Naive thymus-derived CD4-positive, alpha-beta T cell (primary cell): ENCODE measurements at regions of chr12 and their contacts with region 1.

Region 1: DNA sequence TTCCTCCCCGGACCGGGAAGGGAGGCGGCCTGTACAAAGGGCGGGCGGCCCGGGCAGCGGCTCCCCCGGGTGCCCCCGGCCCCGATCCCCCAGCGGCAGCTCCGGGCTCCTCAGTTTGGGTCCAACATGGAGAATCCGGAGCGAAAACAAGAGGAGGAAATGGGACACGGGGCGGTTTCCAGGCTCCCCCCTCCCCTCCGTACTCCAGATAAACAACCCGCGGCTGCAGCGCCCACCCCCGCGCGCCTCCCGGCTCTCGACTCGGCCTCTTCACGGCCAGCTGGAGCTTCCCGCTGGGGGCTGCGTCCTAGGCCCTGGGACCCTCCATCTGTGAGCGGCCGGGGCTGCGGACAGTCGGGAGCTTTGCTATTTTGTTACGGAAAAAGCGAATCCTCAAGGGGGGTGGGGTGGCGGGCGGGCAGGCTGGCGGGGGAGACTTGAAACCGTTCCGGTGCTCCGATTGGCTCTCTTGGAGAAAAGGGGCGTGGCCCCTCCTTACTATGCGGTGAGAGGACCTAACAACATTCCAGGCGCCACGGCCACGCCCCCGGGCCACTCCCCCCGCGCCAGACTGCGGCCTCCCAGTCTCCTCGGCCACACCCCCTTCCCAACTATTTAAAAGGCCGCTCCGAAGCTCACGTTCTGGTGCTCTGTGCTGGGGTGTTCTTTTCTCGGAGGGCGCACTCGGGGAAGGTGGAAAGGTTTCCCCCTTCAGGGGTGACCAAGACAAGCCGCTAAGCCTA is at the start of gene CTDSP2:
- DNase-seq: peak; percentile 59 to 92 (median 82)
- ATAC-seq: peak; percentile 85
- H3K4me3 ChIP-seq: peak within 1 kb of the TSS; percentile 79
- H3K4me3 Mint-ChIP-seq: peak within 1 kb of the TSS; percentile 87 to 97 (median 92)
- H3K27ac ChIP-seq: peak within 1 kb of the TSS; percentile 89
- H3K27ac Mint-ChIP-seq: peak within 1 kb of the TSS; percentile 75 to 94 (median 89)
- H3K4me1 ChIP-seq: peaks cover 15 to 30% of the 10 kb centered on the region in 2 donors
- H3K4me1 Mint-ChIP-seq: peaks cover 48 to 57% (median 50%) of the 10 kb centered on the region in 7 donors
- H3K27me3 ChIP-seq: no peaks in the 10 kb centered on the region
- H3K27me3 Mint-ChIP-seq: peaks cover 0 to 39% (median 9%) of the 10 kb centered on the region in 5 donors
- total RNA-seq, gene CTDSP2: 124 to 295 (median 145) TPM

Region 2: DNA sequence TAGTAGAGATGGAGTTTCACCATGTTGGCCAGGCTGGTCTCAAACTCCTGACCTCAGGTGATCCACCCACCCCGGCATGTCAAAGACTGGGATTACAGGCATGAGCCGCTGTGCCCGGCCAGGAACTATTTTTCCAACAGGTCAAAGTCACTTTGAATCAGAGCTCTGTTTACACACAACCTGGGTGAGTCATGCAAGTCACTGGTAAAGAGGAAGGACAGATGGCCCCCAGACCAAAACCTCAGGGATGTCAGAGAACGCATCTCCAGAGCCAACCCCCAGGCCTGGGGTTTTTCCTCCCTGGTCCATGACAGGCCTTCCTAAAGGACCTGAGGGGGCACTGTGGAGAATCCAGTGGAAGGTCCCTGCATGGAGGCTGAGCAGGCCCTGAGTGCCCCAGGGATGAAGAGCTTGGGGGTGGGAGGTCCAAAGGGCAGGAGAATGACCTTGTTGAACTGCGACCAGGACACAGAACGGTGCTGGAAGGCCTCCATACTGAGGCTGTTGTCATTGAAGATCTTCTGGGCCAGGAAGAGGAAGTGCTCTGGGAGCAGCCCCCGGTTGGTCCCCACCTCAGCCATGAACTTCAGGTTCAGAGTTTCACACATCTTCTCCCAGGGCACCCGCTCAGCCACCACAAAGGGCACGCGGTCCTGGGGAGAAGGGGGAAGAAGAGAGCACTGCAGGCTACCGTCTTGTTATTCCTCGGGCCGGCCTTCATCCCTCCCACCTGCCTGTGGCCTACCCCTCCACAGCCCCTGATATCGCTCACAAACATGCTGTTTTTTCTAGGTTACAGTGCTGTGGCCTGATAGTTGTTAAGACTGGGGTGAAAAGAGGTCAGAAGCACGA is 744.7 kb before region 1 on chr12:
- CTCF ChIA-PET with region 1: no interaction called
- POLR2A ChIA-PET with region 1: no interaction called
- intact Hi-C with region 1: no loop called
- DNase-seq: no peak
- ATAC-seq: peak; percentile 31
- H3K4me3 ChIP-seq: no peak overlapping the region
- H3K4me3 Mint-ChIP-seq: peak overlapping the region in 1 of 10 donors; percentile 52
- H3K27ac ChIP-seq: peak overlapping the region; percentile 43
- H3K27ac Mint-ChIP-seq: peak overlapping the region in 8 of 9 donors; percentile 13 to 84 (median 72)
- H3K4me1 ChIP-seq: no peaks in the 10 kb centered on the region
- H3K4me1 Mint-ChIP-seq: peaks cover 28 to 67% (median 40%) of the 10 kb centered on the region in 7 donors
- H3K27me3 ChIP-seq: no peaks in the 10 kb centered on the region
- H3K27me3 Mint-ChIP-seq: no peaks in the 10 kb centered on the region

Region 3: GRCh38 chr12:57693659-57694458 is 152.9 kb before region 1 on chr12 and contains the start of gene OS9:
- CTCF ChIA-PET with region 1: no interaction called
- POLR2A ChIA-PET with region 1: no interaction called
- intact Hi-C with region 1: loop called in 1 of 2 experiments (anchors 1 kb)
- DNase-seq: peak; percentile 76 to 99 (median 98)
- ATAC-seq: peak; percentile 96
- H3K4me3 ChIP-seq: peak within 1 kb of the TSS; percentile 92
- H3K4me3 Mint-ChIP-seq: no peak within 1 kb of the TSS
- H3K27ac ChIP-seq: peak within 1 kb of the TSS; percentile 83
- H3K27ac Mint-ChIP-seq: no peak within 1 kb of the TSS
- H3K4me1 ChIP-seq: peaks cover 10 to 23% of the 10 kb centered on the region in 2 donors
- H3K4me1 Mint-ChIP-seq: peaks cover 2 to 14% (median 7%) of the 10 kb centered on the region in 7 donors
- H3K27me3 ChIP-seq: no peaks in the 10 kb centered on the region
- H3K27me3 Mint-ChIP-seq: peaks cover 0 to 18% (median 7%) of the 10 kb centered on the region in 5 donors
- total RNA-seq, gene OS9: 139 to 175 (median 171) TPM

Region 4: GRCh38 chr12:57803319-57803893 is 43.3 kb before region 1 on chr12:
- CTCF ChIA-PET with region 1: interaction called, 6 read pairs
- POLR2A ChIA-PET with region 1: interaction called, 4 read pairs
- intact Hi-C with region 1: loop called in 1 of 2 experiments (anchors 1 kb)
- DNase-seq: peak in 6 of 9 donors; percentile 23 to 46 (median 35)
- ATAC-seq: peak; percentile 60
- H3K4me3 ChIP-seq: no peak overlapping the region
- H3K4me3 Mint-ChIP-seq: no peak overlapping the region
- H3K27ac ChIP-seq: no peak overlapping the region
- H3K27ac Mint-ChIP-seq: peak overlapping the region in 1 of 9 donors; percentile 21
- H3K4me1 ChIP-seq: no peaks in the 10 kb centered on the region
- H3K4me1 Mint-ChIP-seq: peaks cover 0 to 7% (median 0%) of the 10 kb centered on the region in 7 donors
- H3K27me3 ChIP-seq: no peaks in the 10 kb centered on the region
- H3K27me3 Mint-ChIP-seq: no peaks in the 10 kb centered on the region

Region 5: GRCh38 chr12:57865090-57865751 is 18.5 kb after region 1 on chr12:
- CTCF ChIA-PET with region 1: interaction called, 3 read pairs
- POLR2A ChIA-PET with region 1: interaction called, 9 read pairs
- intact Hi-C with region 1: loop called (anchors 1 to 2 kb)
- DNase-seq: peak in 4 of 9 donors; percentile 21 to 68 (median 42)
- ATAC-seq: peak; percentile 83
- H3K4me3 ChIP-seq: peak overlapping the region; percentile 50
- H3K4me3 Mint-ChIP-seq: peak overlapping the region; percentile 77 to 94 (median 85)
- H3K27ac ChIP-seq: no peak overlapping the region
- H3K27ac Mint-ChIP-seq: peak overlapping the region in 5 of 9 donors; percentile 31 to 82 (median 47)
- H3K4me1 ChIP-seq: no peaks in the 10 kb centered on the region
- H3K4me1 Mint-ChIP-seq: peaks cover 4 to 10% (median 9%) of the 10 kb centered on the region in 7 donors
- H3K27me3 ChIP-seq: no peaks in the 10 kb centered on the region
- H3K27me3 Mint-ChIP-seq: peaks cover 11 to 26% (median 20%) of the 10 kb centered on the region in 5 donors

Region 6: DNA sequence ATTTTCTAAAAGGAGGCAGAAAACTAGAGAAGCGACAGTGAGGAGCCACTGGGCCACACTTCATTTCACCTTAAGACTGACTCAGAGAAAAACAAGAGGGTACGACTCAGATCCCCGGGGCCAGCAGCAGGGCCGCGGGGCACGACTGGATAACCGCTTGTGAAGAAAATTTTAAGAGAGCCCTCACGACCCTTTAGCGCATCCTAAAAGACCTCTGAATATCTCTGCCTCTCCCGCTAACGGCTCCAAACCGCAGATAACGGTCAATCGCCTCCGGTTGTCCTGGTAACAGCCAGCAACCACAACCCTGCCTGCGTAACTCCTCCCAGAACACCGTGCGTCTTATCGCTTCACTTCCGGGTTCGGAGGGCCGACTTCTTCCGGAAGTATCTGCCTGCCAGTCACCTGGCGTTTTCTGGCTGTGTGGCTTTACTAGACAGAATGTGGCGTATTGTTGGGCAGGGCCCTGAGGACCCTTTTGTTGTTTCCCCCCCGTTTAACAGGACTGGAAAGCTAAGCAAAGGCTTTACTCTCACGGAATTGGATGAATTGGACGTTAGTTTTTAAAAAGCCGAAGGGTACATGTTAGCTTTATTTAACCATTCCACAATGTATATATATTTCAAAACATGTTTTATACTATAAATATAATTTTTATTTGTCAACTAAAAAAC is 89.2 kb after region 1 on chr12:
- CTCF ChIA-PET with region 1: no interaction called
- POLR2A ChIA-PET with region 1: interaction called, 3 read pairs
- intact Hi-C with region 1: loop called (anchors 1 to 2 kb)
- DNase-seq: peak; percentile 65 to 95 (median 92)
- ATAC-seq: peak; percentile 96
- H3K4me3 ChIP-seq: peak overlapping the region; percentile 71
- H3K4me3 Mint-ChIP-seq: peak overlapping the region; percentile 84 to 99 (median 98)
- H3K27ac ChIP-seq: peak overlapping the region; percentile 98
- H3K27ac Mint-ChIP-seq: peak overlapping the region; percentile 98 to 100 (median 99)
- H3K4me1 ChIP-seq: peaks cover 21 to 23% of the 10 kb centered on the region in 2 donors
- H3K4me1 Mint-ChIP-seq: peaks cover 21 to 47% (median 34%) of the 10 kb centered on the region in 7 donors
- H3K27me3 ChIP-seq: no peaks in the 10 kb centered on the region
- H3K27me3 Mint-ChIP-seq: peaks cover 0 to 2% (median 0%) of the 10 kb centered on the region in 5 donors